A673 (cell line): ENCODE measurements at regions of chr3 and their contacts with region 1.

Region 1: DNA sequence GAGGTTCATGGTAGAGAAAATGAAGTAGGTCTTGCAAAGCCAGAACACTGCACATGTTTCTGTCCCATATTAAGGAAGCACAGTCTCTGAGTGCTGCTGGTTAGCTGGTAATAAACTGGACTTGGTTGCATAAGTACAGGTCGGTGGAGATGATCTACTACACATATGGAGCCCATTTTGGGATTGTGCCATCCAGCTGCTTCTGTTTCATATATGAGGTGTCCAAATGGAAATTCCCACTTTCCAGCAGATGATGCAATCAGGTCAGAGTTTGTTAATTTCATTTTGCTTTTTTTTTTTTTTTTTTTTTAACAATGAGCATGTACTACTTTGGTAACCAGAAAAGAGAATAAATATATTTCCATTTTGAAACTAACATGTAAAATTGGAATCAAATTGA is 122.6 kb downstream of the SATB1 start:
- DNase-seq: no peak
- H3K4me3 ChIP-seq: no peak overlapping the region
- H3K27ac ChIP-seq: no peak overlapping the region
- H3K4me1 ChIP-seq: no peaks in the 10 kb centered on the region
- H3K27me3 ChIP-seq: no peaks in the 10 kb centered on the region
- CTCF ChIP-seq: no peak

Region 2: DNA sequence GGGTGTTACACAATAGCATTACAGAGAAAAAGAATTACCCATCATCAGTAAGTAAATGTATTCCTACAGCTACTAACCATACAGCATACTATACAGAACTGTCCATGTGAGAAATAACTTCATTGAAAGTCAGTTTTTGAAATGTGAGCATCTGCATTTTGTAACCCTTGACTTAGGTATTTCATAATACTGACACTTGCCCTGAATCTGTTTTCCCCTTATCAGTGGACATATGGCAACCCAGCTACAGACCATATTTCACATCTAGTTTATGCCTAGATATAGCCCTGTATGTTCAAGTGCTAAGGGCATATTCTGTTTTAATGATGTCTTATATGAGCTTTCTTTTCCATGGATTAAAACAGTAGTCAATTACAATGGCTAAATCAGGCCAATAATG is 857.7 kb before region 1 on chr3:
- CTCF ChIA-PET with region 1: no interaction called
- POLR2A ChIA-PET with region 1: no interaction called
- intact Hi-C with region 1: no loop called
- DNase-seq: no peak
- H3K4me3 ChIP-seq: no peak overlapping the region
- H3K27ac ChIP-seq: no peak overlapping the region
- H3K4me1 ChIP-seq: no peaks in the 10 kb centered on the region
- H3K27me3 ChIP-seq: no peaks in the 10 kb centered on the region
- CTCF ChIP-seq: no peak

Region 3: DNA sequence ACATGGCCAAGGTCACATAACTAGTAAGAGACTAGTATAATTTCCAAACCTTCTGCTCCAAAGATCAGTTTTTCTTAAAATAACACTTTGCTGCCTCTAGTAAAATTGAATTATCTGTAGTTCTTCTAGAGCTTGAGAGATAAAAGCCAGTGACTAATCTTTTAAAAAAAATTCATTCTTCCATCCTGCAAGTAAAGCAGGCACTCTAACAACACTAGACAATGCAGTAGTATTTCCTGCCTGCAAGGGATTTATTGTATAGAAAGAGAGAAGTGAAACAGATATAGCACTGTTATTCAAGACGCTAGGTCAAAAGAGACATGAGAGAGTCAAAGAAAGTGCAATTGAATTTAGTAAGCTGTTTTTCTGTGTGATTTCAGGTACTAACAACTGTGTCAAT is 400.6 kb before region 1 on chr3:
- CTCF ChIA-PET with region 1: no interaction called
- POLR2A ChIA-PET with region 1: no interaction called
- intact Hi-C with region 1: loop called (anchors 10 kb)
- DNase-seq: no peak
- H3K4me3 ChIP-seq: no peak overlapping the region
- H3K27ac ChIP-seq: no peak overlapping the region
- H3K4me1 ChIP-seq: no peaks in the 10 kb centered on the region
- H3K27me3 ChIP-seq: no peaks in the 10 kb centered on the region
- CTCF ChIP-seq: no peak